ENCODE measurements at regions of chr1 and their contacts with region 1.

Region 1: GRCh38 chr1:108125312-108126138 is 74.6 kb downstream of the SLC25A24 start:
- DNase-seq: peak; percentile 63
- H3K4me3 ChIP-seq: no peak overlapping the region
- H3K27ac ChIP-seq: no peak overlapping the region
- H3K4me1 ChIP-seq: no peaks in the 10 kb centered on the region
- H3K27me3 ChIP-seq: no peaks in the 10 kb centered on the region
- CTCF ChIP-seq: peak; percentile 95

Region 2: GRCh38 chr1:107782217-107782845 is 343.2 kb before region 1 on chr1:
- intact Hi-C with region 1: loop called (anchors 1 kb)
- DNase-seq: peak; percentile 50
- H3K4me3 ChIP-seq: no peak overlapping the region
- H3K27ac ChIP-seq: no peak overlapping the region
- H3K4me1 ChIP-seq: no peaks in the 10 kb centered on the region
- H3K27me3 ChIP-seq: no peaks in the 10 kb centered on the region
- CTCF ChIP-seq: peak; percentile 64